ENCODE measurements at regions of chr17 and their contacts with region 1.

Region 1: GRCh38 chr17:8119581-8120519 is 1.5 kb upstream of the ALOXE3 start:
- DNase-seq: peak; percentile 86
- ATAC-seq: peak; percentile 57
- H3K4me3 ChIP-seq: peak overlapping the region; percentile 67
- H3K27ac ChIP-seq: peak overlapping the region; percentile 68
- H3K4me1 ChIP-seq: peaks cover 63% of the 10 kb centered on the region
- H3K27me3 ChIP-seq: peaks cover 47% of the 10 kb centered on the region
- CTCF ChIP-seq: no peak

Region 2: GRCh38 chr17:8189711-8190477 is 70.0 kb after region 1 on chr17 and contains the start of gene BORCS6:
- intact Hi-C with region 1: loop called (anchors 5 kb)
- DNase-seq: peak; percentile 97
- ATAC-seq: peak; percentile 84
- H3K4me3 ChIP-seq: peak within 1 kb of the TSS; percentile 75
- H3K27ac ChIP-seq: peak within 1 kb of the TSS; percentile 94
- H3K4me1 ChIP-seq: peaks cover 39% of the 10 kb centered on the region
- H3K27me3 ChIP-seq: no peaks in the 10 kb centered on the region
- CTCF ChIP-seq: peak; percentile 19
- total RNA-seq, gene BORCS6: 7.8 TPM

Measured in upper lobe of right lung (tissue), 1 donor.